Right ventricle myocardium inferior (tissue), 1 donor: ENCODE measurements at regions of chr4 and their contacts with region 1.

Region 1: DNA sequence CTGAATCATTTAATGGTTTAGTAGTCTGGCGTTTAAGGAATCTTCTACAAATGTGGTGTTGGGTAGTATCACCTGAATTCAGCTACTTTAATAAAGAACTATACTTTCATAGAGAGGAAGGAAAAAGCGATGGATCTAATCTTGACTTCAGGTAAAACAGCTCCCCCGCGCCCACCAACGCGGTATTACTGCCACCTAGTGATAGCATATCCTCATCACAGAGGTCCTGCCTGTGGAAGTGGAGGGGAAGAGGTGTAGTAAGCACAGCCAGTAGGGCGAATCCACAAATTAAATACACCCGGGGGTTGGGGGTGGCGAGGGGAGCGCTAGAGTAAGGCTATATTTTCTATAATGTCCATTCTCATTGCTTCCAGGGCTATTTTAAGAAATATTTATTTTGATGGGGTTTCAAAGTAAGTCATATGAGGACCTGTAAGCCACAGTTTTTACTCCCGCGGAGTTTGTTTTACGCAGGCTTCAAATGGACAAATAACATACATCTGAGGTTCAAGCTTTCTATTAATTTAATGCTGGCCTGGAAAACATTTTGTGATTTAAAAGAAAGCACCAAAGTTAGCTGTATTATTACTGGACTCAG is 8.3 kb upstream of the DAPP1 start:
- DNase-seq: peak; percentile 83
- ATAC-seq: peak; percentile 77

Region 2: DNA sequence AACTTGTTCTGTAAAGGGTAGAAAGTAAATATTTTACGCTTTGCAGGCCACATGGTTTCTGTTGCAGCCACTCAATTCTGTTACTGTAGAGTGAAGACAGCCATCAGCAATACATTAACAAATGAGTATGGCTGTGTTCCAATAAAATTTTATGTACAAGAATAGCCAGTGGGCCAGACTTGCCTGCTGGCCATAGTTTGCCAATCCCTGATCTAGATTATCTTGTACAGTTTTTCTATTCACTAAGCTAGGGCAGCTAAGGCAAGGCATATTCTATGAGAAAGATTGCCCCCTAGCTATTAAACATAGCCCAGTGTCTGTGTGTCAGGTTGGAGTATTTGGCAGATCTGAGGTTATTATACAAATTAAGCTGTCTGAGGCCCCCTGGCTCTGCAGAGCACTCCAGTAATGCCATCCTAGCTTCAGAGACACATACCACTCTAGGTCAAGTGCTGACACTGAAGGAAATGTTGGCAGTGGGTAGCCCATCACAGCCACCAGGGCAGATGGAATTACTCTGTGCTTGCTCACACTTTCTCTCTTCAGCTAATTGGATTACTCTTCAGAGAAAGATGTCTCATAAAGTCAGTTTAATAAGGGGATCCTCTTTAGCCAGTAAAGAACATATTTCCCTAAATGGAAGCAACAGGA is 193.1 kb before region 1 on chr4:
- intact Hi-C with region 1: loop called (anchors 1 kb)
- DNase-seq: peak; percentile 40
- ATAC-seq: peak; percentile 91

Region 3: GRCh38 chr4:99655308-99656081 is 152.9 kb before region 1 on chr4:
- intact Hi-C with region 1: loop called (anchors 5 kb)
- DNase-seq: peak; percentile 70
- ATAC-seq: peak; percentile 47

Region 4: DNA sequence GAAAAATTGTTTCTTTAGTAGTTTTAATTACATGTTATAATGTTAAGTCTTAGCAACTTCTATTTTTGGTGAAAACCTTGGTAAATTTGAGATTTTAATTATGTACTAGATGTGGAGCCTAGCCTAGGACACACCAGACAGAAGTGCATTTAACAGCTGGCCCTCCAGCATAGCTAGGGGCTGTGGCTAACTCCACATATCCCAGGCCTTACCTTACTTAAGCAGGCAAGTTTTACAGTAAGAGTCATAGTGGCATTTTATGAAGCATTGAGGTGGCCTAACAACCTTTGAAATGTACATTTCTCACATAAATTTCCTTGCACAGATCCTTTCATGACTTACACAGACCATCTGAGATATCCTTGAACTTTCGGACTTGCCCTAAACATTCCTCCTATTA is 79.2 kb before region 1 on chr4:
- intact Hi-C with region 1: no loop called
- DNase-seq: no peak
- ATAC-seq: no peak

Region 5: DNA sequence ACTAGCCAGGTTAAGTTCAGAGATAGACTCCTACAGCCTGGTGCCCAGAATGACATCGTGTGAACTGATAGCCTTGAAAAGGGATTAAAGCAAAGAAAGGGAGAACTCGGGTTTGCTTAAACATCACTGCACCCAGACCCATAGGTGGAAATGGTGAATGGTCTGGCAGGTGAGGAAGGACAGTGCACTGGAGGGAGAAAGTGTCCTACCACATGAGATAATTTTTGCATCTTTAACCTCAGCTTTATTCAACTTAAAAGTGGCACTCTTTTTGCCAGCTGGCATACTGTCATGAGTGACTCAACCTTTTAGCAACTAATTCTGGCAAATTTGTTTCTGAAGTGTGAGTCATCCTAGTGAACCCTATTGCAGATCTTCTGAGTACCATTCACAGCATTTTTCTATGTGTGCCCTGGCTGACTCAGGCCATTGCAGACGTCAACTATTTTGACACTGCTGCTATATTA is 44.7 kb before region 1 on chr4:
- intact Hi-C with region 1: no loop called
- DNase-seq: no peak
- ATAC-seq: no peak

Region 6: DNA sequence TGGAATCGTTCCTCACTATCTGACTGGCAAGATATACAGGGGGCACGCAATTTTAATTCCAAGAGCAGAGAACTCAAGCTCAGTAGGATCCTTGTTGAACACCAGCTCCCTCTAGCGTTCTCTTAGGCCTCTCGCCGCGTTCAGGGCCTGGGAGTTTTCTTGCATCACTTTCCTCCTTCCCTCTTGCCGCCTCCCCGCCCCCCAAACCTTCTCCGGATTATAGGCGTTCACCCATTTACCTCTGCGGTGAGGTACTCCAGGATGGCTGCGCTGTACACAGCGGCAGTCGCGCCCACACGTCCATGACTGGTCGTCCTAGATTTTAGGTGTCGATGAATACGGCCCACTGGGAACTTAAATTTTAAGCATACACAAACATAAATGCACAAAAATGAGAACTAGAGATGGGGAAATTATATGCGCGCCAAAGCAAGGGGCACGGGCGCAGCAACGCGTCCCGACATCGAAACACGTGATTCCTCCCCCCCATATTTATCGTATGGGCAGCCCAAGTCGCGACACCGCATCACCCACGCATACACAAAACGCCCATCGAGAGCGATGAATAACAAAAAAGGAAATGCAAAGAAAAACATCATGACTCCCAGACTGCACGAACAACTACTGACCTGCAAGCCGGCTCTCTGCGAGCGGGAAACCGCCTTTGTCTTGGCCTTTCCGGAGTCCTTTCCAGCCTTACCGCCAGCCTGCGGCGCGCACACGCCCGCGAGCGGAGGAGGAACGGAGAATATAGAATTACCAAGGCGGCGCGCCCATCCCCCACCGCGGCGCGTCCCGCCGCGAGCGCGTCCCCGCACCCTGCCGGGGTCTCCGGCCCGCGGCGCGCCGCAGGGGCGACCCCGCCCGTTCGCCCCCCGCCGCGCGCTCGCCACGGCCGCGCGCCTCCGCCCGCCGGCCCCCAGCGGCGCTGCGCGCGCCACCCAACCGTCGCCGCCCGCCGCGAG is 141.0 kb after region 1 on chr4:
- intact Hi-C with region 1: no loop called
- DNase-seq: peak; percentile 95
- ATAC-seq: peak; percentile 37